ENCODE measurements at regions of chr1 and their contacts with region 1.

Region 1: GRCh38 chr1:12078938-12079861 is 16.1 kb downstream of the TNFRSF8 start:
- DNase-seq: no peak
- H3K4me3 ChIP-seq: no peak overlapping the region
- CTCF ChIP-seq: peak; percentile 70

Region 2: DNA sequence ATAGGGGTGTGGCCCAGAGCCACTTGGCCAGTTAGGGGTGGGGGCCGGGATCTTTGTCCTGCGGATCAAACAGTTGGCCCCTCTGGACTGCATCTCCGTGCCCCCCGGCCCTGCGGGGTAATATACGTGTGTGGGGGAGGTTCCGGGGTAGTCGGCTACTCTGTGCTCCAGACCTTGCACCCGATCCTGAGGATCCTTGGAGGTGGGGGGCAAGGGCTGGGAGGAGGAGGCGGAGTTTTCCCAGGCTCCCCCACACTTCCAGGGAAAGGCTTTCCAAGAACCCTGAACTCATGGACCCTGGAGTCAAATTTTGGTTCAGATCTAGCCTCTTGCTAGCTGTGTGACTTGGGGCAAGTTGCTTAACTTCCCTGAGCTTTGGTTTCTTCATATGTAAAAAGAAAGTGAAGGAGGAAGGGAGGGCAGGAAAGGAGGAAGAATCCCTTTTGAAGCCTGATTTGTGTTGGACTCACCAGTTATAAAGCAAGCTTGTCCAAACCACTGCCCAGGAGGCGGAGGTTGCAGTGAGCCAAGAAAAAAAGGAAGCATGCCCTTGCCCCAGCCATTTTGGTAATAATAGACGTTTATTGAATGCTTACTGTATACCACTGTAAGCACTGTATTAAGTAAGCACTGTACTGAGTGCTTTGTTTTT is 59.2 kb before region 1 on chr1:
- CTCF ChIA-PET with region 1: interaction called, 17 read pairs
- POLR2A ChIA-PET with region 1: no interaction called
- DNase-seq: no peak
- H3K4me3 ChIP-seq: peak overlapping the region; percentile 85
- CTCF ChIP-seq: no peak

Region 3: DNA sequence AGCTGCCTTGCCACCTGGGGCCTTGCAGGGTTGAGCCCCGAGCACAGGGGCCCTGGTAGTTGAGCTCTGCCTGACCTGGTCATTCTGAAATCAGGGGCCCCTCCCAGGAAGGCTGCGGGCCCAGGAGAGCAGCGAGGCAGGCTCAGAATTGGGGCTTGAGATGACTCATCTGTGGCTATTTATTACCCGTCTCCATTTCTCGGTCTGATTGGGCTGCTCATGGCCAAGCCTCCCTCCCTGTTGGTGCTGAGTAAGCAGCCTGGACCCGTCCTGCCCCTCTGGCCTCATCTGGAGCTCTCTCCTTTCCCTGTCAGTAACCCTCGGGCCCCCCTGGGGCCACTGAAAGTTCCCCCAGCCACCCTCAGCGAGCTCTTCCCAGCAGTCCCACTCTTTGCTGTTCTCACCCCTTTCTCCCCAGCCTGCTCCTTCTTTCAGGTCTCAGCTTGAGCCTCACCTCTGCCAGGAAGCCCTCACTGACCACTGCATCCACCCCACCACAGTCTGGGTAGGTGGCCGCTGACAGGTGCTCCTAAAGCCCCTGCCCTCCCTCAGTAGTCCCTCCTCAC is 27.1 kb before region 1 on chr1:
- CTCF ChIA-PET with region 1: interaction called, 15 read pairs
- POLR2A ChIA-PET with region 1: no interaction called
- DNase-seq: no peak
- H3K4me3 ChIP-seq: no peak overlapping the region
- CTCF ChIP-seq: no peak

Region 4: GRCh38 chr1:12067900-12068821 is 11.0 kb before region 1 on chr1:
- CTCF ChIA-PET with region 1: interaction called, 56 read pairs
- POLR2A ChIA-PET with region 1: interaction called, 4 read pairs
- DNase-seq: no peak
- H3K4me3 ChIP-seq: no peak overlapping the region; the same call in 1 of the 2 replicates
- CTCF ChIP-seq: no peak

Region 5: GRCh38 chr1:12161662-12162458 is 82.7 kb after region 1 on chr1:
- CTCF ChIA-PET with region 1: no interaction called
- POLR2A ChIA-PET with region 1: no interaction called
- DNase-seq: peak; percentile 45
- H3K4me3 ChIP-seq: no peak overlapping the region
- CTCF ChIP-seq: no peak

Measured in AG04449 (cell line).